Right ventricle myocardium superior (tissue), 1 donor: ENCODE measurements at regions of chr2 and their contacts with region 1.

Region 1: DNA sequence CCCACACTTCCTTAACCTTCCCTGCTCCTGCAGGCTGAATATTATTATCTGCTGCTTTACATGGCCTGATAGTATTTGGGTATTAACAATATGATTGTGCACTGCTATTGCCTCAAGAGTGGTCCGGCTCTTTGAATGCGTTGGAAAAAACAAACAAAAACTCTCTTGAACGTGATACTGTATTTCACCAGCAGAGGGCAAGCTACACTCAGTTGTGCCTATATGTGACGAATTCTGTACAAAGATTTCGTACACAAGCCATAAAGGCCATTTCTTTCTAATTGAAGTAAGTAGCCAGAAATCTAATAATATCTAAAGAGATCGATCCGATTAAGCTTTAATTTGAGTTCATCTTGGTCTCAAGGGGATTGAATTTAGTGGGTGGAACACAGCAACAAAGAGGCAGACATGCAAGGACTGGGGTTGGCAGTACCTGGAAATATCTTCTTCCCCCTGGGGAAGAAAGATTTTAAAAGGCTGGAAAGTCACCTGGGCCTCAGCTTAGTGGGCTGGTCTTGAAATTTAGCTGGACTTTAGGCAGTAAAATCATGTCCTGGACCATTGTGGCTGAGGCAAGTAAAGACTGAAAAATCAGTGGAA is 49.3 kb upstream of the RAB6D start:
- DNase-seq: no peak
- ATAC-seq: peak; percentile 78

Region 2: GRCh38 chr2:130884503-130884902 is 528.7 kb before region 1 on chr2:
- intact Hi-C with region 1: no loop called
- DNase-seq: no peak
- ATAC-seq: no peak

Region 3: GRCh38 chr2:131492418-131493198 is 79.4 kb after region 1 on chr2:
- intact Hi-C with region 1: loop called (anchors 10 kb)
- DNase-seq: peak; percentile 95
- ATAC-seq: peak; percentile 86

Region 4: GRCh38 chr2:131673392-131674173 is 260.3 kb after region 1 on chr2:
- intact Hi-C with region 1: loop called (anchors 5 kb)
- DNase-seq: peak; percentile 89
- ATAC-seq: peak; percentile 98